B cell (primary cell): ENCODE measurements at regions of chr15 and their contacts with region 1.

Region 1: DNA sequence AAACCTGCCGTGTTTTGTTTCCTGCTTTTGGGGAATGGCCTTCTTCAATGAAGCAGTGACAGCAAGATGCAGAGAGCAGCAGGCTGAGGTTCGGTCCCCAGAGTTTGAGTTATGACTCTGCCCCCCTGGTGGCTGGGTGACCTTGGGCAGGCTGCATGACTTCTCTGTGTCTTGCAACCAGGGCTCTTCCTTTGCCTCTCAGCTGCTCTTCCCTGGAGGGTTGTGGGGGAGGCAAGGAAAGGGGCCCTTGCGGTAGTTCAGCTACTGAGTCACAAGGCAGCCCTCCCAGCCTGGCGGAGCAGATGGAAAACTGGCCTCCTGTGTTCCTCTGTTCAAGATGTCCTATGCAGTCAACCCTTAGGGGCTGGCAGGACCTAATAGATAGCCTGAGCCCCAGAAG is 17.1 kb downstream of the CTXND1 start:
- DNase-seq: peak; percentile 36
- ATAC-seq: no peak
- H3K4me3 ChIP-seq: no peak overlapping the region
- H3K4me3 Mint-ChIP-seq: no peak overlapping the region
- H3K27ac ChIP-seq: no peak overlapping the region
- H3K27ac Mint-ChIP-seq: no peak overlapping the region
- H3K4me1 ChIP-seq: no peaks in the 10 kb centered on the region
- H3K4me1 Mint-ChIP-seq: no peaks in the 10 kb centered on the region
- H3K27me3 ChIP-seq: peaks cover 0 to 13% (median 5%) of the 10 kb centered on the region in 4 experiments
- H3K27me3 Mint-ChIP-seq: peaks cover 33% of the 10 kb centered on the region
- CTCF ChIP-seq: peak; percentile 47

Region 2: DNA sequence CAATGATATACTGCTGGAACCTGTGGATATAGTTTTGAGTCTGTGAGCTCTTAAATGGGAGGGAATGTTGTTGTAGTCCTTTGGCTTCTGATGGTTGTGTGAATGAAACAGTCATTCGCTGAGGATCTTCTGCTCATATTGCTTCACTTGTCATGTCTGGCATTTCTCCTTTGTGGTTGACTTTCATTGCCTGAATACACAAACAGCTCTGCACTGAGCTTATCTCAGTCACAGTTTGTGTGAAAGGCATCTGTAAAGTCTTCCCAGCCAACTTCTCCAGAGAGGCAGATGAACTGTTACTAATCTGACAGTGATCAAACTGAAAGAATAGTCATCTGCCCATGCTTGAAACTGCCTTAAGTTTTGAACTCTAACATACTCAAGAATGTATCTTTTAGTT is 864.2 kb before region 1 on chr15:
- CTCF ChIA-PET with region 1: no interaction called
- POLR2A ChIA-PET with region 1: no interaction called
- intact Hi-C with region 1: loop called (anchors 2 kb)
- DNase-seq: no peak
- ATAC-seq: no peak
- H3K4me3 ChIP-seq: no peak overlapping the region
- H3K4me3 Mint-ChIP-seq: no peak overlapping the region
- H3K27ac ChIP-seq: no peak overlapping the region
- H3K27ac Mint-ChIP-seq: no peak overlapping the region
- H3K4me1 ChIP-seq: no peaks in the 10 kb centered on the region
- H3K4me1 Mint-ChIP-seq: no peaks in the 10 kb centered on the region
- H3K27me3 ChIP-seq: no peaks in the 10 kb centered on the region
- H3K27me3 Mint-ChIP-seq: no peaks in the 10 kb centered on the region
- CTCF ChIP-seq: no peak